ENCODE measurements at regions of chr7 and their contacts with region 1.

Region 1: GRCh38 chr7:39517240-39517639 is 49.0 kb upstream of the YAE1 start:
- DNase-seq: no peak
- ATAC-seq: no peak
- H3K4me3 ChIP-seq: no peak overlapping the region
- H3K27ac ChIP-seq: no peak overlapping the region
- H3K4me1 ChIP-seq: no peaks in the 10 kb centered on the region
- H3K27me3 ChIP-seq: no peaks in the 10 kb centered on the region
- CTCF ChIP-seq: no peak

Region 2: DNA sequence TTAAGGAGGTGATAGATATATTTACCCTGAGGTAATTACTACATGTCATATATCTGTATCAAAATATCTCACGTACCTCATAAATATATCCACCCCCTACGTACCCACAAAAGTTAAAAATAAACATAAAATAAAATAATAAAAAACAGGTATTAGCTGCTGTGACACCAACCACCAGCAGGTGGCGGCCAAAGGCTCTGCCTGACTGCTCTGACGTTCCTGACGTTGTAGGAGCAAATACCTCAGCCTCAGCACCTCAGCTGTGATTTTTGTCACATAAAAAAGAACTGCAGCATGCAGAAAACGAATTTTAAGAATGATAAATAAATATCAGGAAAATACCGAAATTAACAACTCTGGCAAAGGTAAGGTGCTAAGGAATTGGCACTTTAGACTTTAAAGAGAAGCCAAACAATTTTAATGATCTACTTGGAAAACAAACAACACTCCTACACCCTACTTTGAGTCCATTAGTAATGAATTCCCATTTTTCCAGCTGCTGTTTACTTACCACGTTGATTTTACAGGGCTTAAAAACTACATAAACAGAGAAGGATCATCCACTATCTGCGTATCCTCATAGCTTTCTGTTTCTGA is 1118.4 kb before region 1 on chr7:
- intact Hi-C with region 1: loop called in 1 of 2 experiments (anchors 2 kb)
- DNase-seq: peak; percentile 27 to 59
- ATAC-seq: peak in 1 of 4 donors; percentile 74
- H3K4me3 ChIP-seq: no peak overlapping the region
- H3K27ac ChIP-seq: no peak overlapping the region
- H3K4me1 ChIP-seq: no peaks in the 10 kb centered on the region
- H3K27me3 ChIP-seq: no peaks in the 10 kb centered on the region
- CTCF ChIP-seq: peak; percentile 83

Region 3: DNA sequence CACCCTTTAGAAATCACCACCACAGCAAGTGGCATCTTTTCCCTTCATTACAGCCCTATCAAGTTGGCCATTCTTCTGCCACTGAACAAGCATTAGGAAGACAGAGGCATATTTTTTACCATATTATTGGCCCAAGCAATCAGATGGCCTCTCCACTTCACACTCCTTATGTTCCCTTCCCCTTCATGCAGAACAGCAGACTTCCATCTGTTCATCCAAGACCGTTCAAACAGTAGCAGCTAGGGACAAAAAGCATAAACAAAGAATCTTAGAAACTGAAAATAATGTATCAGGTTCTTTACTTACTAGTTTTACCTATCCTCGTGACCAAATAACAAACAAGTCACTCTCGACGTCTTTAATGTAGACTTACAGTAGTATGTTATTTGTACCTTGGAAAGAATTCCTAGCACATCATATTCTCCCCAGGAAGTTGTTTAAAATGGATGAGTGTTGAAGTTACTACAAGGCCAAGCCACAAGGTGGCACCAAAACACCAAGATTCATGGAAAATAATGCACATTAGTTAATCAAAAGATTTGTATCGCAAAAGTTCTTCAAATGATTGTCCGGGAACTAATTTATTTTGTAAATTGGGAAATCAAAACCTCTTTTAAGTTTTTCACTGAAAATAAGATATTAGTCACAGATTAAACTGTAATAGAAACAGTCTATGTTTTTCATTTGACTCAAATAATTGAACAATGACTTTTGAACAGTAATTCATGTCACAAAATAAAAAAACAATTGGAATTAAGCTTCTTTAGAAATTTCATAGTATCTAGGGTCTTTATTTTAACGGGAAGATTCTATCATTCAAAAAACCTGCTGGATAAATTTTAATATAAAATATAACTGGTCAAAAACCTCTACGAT is 720.4 kb before region 1 on chr7:
- intact Hi-C with region 1: loop called (anchors 2 to 5 kb)
- DNase-seq: peak in 1 of 2 donors; percentile 18
- ATAC-seq: peak in 1 of 4 donors; percentile 73
- H3K4me3 ChIP-seq: no peak overlapping the region
- H3K27ac ChIP-seq: no peak overlapping the region
- H3K4me1 ChIP-seq: no peaks in the 10 kb centered on the region
- H3K27me3 ChIP-seq: no peaks in the 10 kb centered on the region
- CTCF ChIP-seq: peak; percentile 82